Uterus (tissue), 4 donors: ENCODE measurements at regions of chr1 and their contacts with region 1.

Region 1: GRCh38 chr1:200669314-200670241 is at the start of gene DDX59:
- DNase-seq: peak; percentile 96 to 97
- H3K4me3 ChIP-seq: peak within 1 kb of the TSS; percentile 47 to 80
- H3K27ac ChIP-seq: peak within 1 kb of the TSS; percentile 95 to 99
- H3K4me1 ChIP-seq: no peaks in the 10 kb centered on the region
- H3K27me3 ChIP-seq: no peaks in the 10 kb centered on the region
- CTCF ChIP-seq: peak in 2 of 4 experiments; percentile 10 to 28
- POLR2A ChIP-seq: peak; percentile 73 to 93
- total RNA-seq, gene DDX59: 8.2 to 30.5 (median 22.0) TPM

Region 2: GRCh38 chr1:200739499-200740290 is 70.1 kb after region 1 on chr1:
- intact Hi-C with region 1: loop called (anchors 10 kb)
- DNase-seq: peak in 1 of 2 donors; percentile 50
- H3K4me3 ChIP-seq: peak overlapping the region; percentile 77 to 88
- H3K27ac ChIP-seq: peak overlapping the region; percentile 94 to 99
- H3K4me1 ChIP-seq: no peaks in the 10 kb centered on the region
- H3K27me3 ChIP-seq: no peaks in the 10 kb centered on the region
- CTCF ChIP-seq: no peak
- POLR2A ChIP-seq: peak in 1 of 2 donors; percentile 44